T-cell (primary cell): ENCODE measurements at regions of chr6 and their contacts with region 1.

Region 1: DNA sequence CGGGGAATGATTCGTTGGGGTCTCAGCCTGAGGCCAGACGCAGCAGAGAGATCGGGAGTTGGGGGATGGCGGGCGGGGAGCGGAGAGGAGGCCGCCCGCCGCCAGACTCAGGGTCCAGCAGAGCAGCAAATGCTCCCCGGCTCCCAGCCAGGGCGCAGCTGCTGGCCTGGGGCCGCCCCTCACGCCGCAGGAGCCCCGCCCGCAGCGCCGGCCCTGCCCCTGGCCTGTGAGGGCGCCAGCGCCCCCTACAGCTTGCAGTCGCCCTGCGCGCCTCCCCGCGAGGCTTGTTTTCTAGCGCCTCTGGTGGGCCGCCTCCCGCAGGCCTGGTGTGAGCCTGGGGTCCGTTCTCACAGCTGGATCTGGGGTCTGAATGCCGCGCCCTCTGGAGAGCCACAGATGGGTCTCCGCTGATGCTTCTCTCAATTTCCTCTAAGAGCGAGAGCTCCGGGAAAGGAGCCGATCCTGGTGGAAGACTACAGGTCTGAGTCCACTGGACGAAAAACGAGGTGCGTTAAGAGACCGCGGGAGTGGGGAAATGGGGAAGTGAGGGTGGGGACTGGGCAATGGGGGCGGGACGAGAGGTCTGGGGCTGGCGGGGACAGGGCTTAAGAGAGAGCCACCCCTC is 29.9 kb downstream of the TRIM38 start:
- DNase-seq: peak; percentile 77 to 96 (median 89)
- ATAC-seq: peak; percentile 94 to 98 (median 96)
- H3K4me3 ChIP-seq: peak overlapping the region; percentile 70 to 89
- H3K4me3 Mint-ChIP-seq: peak overlapping the region; percentile 91 to 95 (median 94)
- H3K27ac ChIP-seq: peak overlapping the region; percentile 77
- H3K27ac Mint-ChIP-seq: peak overlapping the region; percentile 92 to 94
- H3K4me1 ChIP-seq: peaks cover 9 to 17% of the 10 kb centered on the region in 2 experiments
- H3K4me1 Mint-ChIP-seq: peaks cover 21 to 36% (median 27%) of the 10 kb centered on the region in 3 donors
- H3K27me3 ChIP-seq: no peaks in the 10 kb centered on the region
- H3K27me3 Mint-ChIP-seq: no peaks in the 10 kb centered on the region

Region 2: GRCh38 chr6:25962149-25963127 is 30.1 kb before region 1 on chr6 and contains the start of gene TRIM38:
- CTCF ChIA-PET with region 1: interaction called, 4 to 15 read pairs
- POLR2A ChIA-PET with region 1: no interaction called
- DNase-seq: peak; percentile 36 to 91 (median 76)
- ATAC-seq: peak; percentile 90 to 91 (median 90)
- H3K4me3 ChIP-seq: peak within 1 kb of the TSS; percentile 58 to 95
- H3K4me3 Mint-ChIP-seq: peak within 1 kb of the TSS; percentile 92 to 99 (median 97)
- H3K27ac ChIP-seq: peak within 1 kb of the TSS; percentile 93
- H3K27ac Mint-ChIP-seq: peak within 1 kb of the TSS; percentile 98 to 100
- H3K4me1 ChIP-seq: peaks cover 14 to 58% of the 10 kb centered on the region in 2 experiments
- H3K4me1 Mint-ChIP-seq: peaks cover 81 to 90% (median 86%) of the 10 kb centered on the region in 3 donors
- H3K27me3 ChIP-seq: no peaks in the 10 kb centered on the region
- H3K27me3 Mint-ChIP-seq: no peaks in the 10 kb centered on the region
- total RNA-seq, gene TRIM38: 20.5 to 29.3 (median 26.2) TPM

Region 3: DNA sequence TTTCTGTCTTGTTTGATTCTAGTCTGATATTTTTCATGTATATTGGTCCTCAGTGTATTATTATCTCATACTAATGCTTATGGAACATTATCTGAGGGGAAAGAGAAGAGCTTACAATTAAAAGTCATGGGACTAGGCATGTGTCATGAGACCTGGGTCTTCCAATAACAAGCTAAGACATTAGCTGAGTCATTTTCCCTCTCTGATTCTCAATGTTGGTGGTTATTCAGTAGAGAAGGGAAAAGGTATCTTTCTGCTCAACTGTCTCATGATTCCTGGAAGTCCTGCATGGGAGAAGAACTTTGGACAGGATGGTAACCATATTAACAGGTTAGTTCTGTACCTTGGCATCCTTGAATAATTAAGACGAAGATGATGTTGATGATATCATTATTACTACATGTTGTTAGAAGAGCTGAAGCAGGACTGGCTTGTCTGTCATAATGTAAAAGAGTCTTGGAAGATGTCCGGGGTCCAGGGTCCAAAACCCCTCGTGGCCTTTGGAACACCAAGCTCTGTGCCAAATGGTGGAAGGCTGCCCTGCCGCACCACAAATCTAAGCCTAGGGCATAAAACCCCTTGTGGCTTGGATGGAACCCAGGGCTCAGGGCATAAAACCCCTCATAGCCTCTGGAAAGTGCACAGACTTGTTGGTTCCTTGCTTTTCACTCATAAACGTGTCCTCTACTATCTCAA is 10.8 kb before region 1 on chr6:
- CTCF ChIA-PET with region 1: interaction called, 9 read pairs
- POLR2A ChIA-PET with region 1: interaction called in 1 of 2 experiments, 12 read pairs
- DNase-seq: no peak
- ATAC-seq: no peak
- H3K4me3 ChIP-seq: no peak overlapping the region
- H3K4me3 Mint-ChIP-seq: no peak overlapping the region
- H3K27ac ChIP-seq: no peak overlapping the region
- H3K27ac Mint-ChIP-seq: peak overlapping the region; percentile 11 to 50
- H3K4me1 ChIP-seq: no peaks in the 10 kb centered on the region
- H3K4me1 Mint-ChIP-seq: peaks cover 12 to 18% (median 18%) of the 10 kb centered on the region in 3 donors
- H3K27me3 ChIP-seq: no peaks in the 10 kb centered on the region
- H3K27me3 Mint-ChIP-seq: no peaks in the 10 kb centered on the region